ENCODE measurements at regions of chr22 and their contacts with region 1.

Region 1: DNA sequence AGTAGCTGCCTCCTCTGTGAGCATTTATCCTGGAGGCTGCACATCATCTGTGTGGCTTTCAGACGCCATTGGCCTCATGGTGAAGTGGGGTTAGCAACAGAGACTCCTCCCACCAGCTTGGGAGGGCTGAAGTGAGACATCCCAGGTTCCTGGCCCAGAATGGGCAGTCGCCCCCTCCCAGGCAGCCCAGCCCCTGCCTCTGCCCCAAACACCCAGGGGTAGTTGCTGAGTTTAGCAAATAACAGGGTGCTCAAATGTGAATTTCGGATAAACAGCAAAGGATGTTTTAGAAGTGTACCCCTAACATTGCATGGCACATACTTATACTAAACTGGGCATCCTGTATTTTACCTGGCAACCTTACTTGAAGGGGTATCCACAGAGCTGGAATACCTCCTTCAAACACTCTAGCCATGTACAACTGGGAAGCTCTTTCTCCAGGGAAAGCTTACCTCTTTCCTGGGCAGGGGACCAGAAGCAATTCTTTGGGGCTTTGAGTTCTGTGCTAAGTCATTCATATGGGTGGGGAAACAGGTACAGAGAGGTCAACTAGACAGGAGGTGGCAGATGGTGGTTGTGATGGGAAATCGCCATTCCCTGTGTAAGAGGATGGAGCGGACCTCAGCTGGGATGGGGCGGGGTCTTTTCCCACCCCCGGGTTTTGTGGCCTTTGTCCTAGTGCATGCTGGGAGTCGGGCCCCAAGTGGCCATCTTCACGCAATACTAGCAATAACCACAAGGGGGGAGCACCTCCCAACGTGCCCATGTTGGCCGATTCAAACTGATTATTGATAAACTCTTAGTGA is 19.3 kb downstream of the MTFP1 start:
- DNase-seq: no peak
- ATAC-seq: peak; percentile 71
- H3K4me3 Mint-ChIP-seq: no peak overlapping the region
- H3K27ac Mint-ChIP-seq: no peak overlapping the region
- H3K4me1 Mint-ChIP-seq: peaks cover 11% of the 10 kb centered on the region
- H3K27me3 Mint-ChIP-seq: peaks cover 44% of the 10 kb centered on the region
- CTCF ChIP-seq: peak; percentile 22

Region 2: DNA sequence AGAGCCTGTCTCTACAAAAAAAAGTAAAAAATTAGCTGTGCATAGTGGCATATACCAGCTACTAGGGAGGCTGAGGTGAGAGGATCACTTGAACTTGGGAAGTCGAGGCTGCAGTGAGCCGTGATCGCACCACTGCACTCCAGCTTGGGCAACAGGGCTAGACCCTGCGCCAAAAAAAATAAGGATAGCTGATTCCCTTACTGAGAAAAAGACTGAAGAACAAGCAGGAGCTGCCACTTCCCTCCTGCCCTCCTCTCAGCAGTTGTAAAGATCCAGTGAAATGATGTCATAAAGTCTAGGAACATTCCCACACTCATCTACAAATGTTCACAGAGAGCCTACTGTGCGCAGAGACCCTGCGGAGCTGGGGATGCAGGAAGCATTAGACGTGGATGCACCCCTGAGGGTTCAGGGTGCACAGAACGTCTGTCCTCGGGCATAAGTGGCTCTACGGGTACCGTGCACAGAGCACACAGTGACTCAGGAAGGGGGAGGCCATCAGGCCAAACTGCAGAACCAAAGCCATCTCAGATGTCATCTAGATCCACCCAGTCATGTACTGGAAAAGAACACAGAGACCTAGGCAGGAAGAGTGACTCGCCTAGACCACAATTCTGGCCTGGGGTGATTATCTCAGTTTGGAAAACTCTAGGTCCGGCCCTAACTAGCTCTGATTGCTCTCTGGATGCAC is 36.3 kb before region 1 on chr22:
- CTCF ChIA-PET with region 1: no interaction called
- POLR2A ChIA-PET with region 1: no interaction called
- intact Hi-C with region 1: no loop called
- DNase-seq: no peak
- ATAC-seq: no peak
- H3K4me3 Mint-ChIP-seq: no peak overlapping the region
- H3K27ac Mint-ChIP-seq: no peak overlapping the region
- H3K4me1 Mint-ChIP-seq: no peaks in the 10 kb centered on the region
- H3K27me3 Mint-ChIP-seq: no peaks in the 10 kb centered on the region
- CTCF ChIP-seq: no peak

Region 3: DNA sequence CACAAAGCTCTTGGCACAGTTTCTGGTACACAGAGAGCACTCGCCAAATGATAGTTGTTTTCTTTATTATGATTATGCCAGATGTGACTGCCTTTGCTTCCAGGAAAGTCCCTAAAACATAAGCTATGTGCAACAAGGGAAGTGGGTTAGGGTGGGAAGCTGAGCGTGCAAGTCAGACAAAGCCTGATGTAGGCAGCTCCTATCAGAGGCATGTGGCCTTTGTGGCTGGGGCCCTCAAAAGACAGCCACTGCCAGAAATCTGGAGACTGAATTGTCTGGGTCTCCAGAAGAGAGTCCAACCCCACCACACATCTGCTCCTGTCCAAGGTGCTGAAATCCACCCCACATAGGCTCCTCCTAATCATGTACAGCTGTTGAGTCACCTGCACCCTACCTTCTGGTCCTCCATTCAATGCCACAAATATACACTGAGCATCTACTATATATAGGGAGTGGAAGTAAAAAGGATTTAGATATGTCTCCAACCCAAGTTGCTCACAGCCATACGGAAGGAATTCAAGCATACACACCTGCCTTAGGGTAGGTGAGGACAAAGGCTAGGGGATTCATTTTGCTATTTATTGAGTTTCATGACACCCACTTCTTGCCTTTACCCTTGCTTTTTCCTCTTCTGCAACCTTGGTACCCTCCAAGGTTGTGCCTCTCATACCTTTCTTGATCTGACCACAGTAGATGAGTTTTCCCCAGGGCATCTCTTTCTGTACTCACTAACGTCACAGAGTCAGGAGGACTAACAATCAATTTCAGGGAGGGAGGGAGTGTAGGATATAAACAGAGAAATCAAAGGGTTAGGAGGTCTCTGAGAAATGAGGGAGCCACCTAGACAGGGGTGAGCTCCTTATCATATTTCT is 14.6 kb after region 1 on chr22:
- CTCF ChIA-PET with region 1: no interaction called
- POLR2A ChIA-PET with region 1: no interaction called
- intact Hi-C with region 1: no loop called
- DNase-seq: no peak
- ATAC-seq: no peak
- H3K4me3 Mint-ChIP-seq: no peak overlapping the region
- H3K27ac Mint-ChIP-seq: no peak overlapping the region
- H3K4me1 Mint-ChIP-seq: no peaks in the 10 kb centered on the region
- H3K27me3 Mint-ChIP-seq: peaks cover 11% of the 10 kb centered on the region
- CTCF ChIP-seq: no peak

Region 4: GRCh38 chr22:30485362-30485988 is 40.6 kb after region 1 on chr22:
- CTCF ChIA-PET with region 1: no interaction called
- POLR2A ChIA-PET with region 1: no interaction called
- intact Hi-C with region 1: loop called (anchors 1 kb)
- DNase-seq: peak; percentile 66
- ATAC-seq: peak; percentile 93
- H3K4me3 Mint-ChIP-seq: no peak overlapping the region
- H3K27ac Mint-ChIP-seq: no peak overlapping the region
- H3K4me1 Mint-ChIP-seq: no peaks in the 10 kb centered on the region
- H3K27me3 Mint-ChIP-seq: peaks cover 9% of the 10 kb centered on the region
- CTCF ChIP-seq: peak; percentile 31

Region 5: DNA sequence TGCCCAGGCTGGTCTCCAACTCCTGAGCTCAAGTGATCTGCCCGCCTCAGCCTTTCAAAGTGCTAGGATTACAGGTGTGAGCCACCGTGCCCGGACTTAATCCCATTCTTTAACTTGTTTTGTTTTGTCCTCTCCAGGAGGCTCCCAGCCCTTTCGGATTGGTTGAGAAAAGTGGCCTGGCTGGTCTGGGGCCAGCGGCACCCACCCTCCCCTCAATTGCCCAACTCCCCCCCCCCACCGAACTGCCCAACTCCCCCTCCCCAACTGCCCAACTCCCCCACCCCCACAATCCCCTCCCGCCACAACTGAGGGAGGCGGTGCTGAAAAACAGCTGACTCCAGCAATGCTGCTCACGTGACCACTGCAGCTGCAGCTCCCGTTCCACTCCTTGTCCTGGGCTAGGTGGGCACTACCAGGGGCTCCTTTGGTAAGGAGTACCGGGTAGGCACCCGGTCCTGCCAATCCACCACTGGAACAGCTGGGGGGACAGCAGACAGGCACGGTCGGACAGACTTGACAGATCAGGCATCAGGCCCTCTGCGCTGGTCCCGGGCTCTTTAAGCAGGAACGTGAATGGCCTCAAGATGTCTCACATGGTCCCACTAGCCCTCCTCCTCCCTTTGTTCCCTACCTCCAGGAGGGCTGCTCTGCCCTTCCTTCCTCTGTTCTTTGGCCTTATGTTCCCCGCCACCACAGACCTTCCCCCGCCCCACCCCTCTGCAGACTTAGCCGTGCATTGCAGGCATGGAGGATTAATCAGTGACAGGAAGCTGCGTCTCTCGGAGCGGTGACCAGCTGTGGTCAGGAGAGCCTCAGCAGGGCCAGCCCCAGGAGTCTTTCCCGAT is 161.8 kb after region 1 on chr22 and contains the start of gene TCN2:
- CTCF ChIA-PET with region 1: no interaction called
- POLR2A ChIA-PET with region 1: no interaction called
- intact Hi-C with region 1: loop called (anchors 2 kb)
- DNase-seq: peak; percentile 22
- ATAC-seq: peak; percentile 59
- H3K4me3 Mint-ChIP-seq: peak within 1 kb of the TSS; percentile 83
- H3K27ac Mint-ChIP-seq: peak within 1 kb of the TSS; percentile 20
- H3K4me1 Mint-ChIP-seq: peaks cover 35% of the 10 kb centered on the region
- H3K27me3 Mint-ChIP-seq: peaks cover 5% of the 10 kb centered on the region
- CTCF ChIP-seq: no peak
- total RNA-seq, gene TCN2: not detected in 2 replicates

Measured in activated B cell treated with CpG ODN at 0.5 μM for 24 hours (primary cell).